Breast epithelium (tissue), 4 donors: ENCODE measurements at regions of chr11 and their contacts with region 1.

Region 1: GRCh38 chr11:75525596-75526541 is at the start of gene GDPD5:
- DNase-seq: peak; percentile 65 to 78
- H3K4me3 ChIP-seq: peak within 1 kb of the TSS; percentile 73 to 93 (median 74)
- H3K27ac ChIP-seq: peak within 1 kb of the TSS; percentile 48 to 61
- H3K4me1 ChIP-seq: peaks cover 0 to 8% of the 10 kb centered on the region in 2 donors
- H3K27me3 ChIP-seq: no peaks in the 10 kb centered on the region
- CTCF ChIP-seq: peak in 1 of 3 donors; percentile 21
- POLR2A ChIP-seq: no peak
- total RNA-seq, gene GDPD5: 10.5 to 25.9 (median 14.8) TPM

Region 2: GRCh38 chr11:74926304-74927030 is 599.4 kb before region 1 on chr11:
- intact Hi-C with region 1: no loop called
- DNase-seq: no peak
- H3K4me3 ChIP-seq: no peak overlapping the region
- H3K27ac ChIP-seq: no peak overlapping the region
- H3K4me1 ChIP-seq: no peaks in the 10 kb centered on the region
- H3K27me3 ChIP-seq: no peaks in the 10 kb centered on the region
- CTCF ChIP-seq: no peak
- POLR2A ChIP-seq: no peak

Region 3: DNA sequence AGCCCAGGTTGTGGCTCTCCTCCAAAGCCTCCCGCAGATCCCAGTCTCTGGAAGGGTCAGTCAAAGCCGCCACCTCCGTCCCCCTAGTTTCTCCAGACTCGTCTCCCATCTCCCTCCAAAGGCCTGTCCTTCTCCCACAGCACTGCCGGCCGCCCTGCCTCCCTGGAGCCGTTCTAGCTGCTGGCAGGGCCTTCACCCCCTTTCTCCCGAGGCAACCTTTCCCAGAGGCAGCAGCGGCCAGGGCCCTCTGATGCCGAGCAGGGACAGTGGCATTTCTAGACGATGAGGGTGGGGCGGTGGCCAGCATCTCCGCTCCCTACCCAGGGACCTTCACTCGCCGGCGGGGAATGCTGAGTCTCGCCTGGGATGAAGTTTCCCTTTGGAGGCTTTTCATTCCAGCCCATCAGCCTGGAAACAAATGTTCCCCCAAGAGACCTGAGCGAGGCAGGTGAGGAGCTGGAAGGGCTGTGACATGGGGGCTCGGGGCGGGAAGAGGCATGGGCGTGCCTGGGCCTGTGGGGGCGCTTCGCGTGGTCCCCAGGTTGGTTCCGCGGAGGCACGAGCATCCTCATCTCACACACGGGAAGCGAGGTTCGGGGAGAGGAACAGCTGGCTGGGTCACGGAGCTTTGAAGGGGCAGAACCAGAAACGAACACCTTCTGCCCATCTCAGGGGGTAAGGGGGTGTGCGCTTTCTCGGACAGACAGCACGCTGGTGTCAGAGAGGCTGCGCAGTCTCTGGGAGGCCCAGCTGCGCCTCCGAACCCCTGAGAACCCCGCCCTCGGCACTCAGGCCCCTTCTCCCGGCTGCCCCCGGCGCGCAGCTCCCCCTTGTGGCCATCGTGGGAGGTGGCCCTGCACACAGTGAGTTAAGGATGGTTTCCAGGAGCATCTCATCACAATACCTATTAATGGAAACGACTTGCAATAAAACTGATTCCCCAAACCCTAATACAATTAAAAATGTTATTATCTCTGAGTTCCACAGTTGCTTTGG is 74.7 kb before region 1 on chr11:
- intact Hi-C with region 1: loop called (anchors 5 kb)
- DNase-seq: no peak
- H3K4me3 ChIP-seq: no peak overlapping the region
- H3K27ac ChIP-seq: no peak overlapping the region
- H3K4me1 ChIP-seq: no peaks in the 10 kb centered on the region
- H3K27me3 ChIP-seq: no peaks in the 10 kb centered on the region
- CTCF ChIP-seq: no peak
- POLR2A ChIP-seq: no peak